ENCODE measurements at regions of chr17 and their contacts with region 1.

Region 1: GRCh38 chr17:73710095-73710592 is 65.9 kb upstream of the SDK2 start:
- DNase-seq: peak; percentile 65 to 89
- H3K4me3 ChIP-seq: no peak overlapping the region
- H3K27ac ChIP-seq: no peak overlapping the region
- H3K4me1 ChIP-seq: peaks cover 0 to 6% (median 0%) of the 10 kb centered on the region in 4 donors
- H3K27me3 ChIP-seq: peaks cover 0 to 67% (median 8%) of the 10 kb centered on the region in 3 donors
- CTCF ChIP-seq: peak in 5 of 7 experiments; percentile 63 to 80 (median 69)
- EP300 ChIP-seq: no peak
- POLR2A ChIP-seq: no peak

Region 2: DNA sequence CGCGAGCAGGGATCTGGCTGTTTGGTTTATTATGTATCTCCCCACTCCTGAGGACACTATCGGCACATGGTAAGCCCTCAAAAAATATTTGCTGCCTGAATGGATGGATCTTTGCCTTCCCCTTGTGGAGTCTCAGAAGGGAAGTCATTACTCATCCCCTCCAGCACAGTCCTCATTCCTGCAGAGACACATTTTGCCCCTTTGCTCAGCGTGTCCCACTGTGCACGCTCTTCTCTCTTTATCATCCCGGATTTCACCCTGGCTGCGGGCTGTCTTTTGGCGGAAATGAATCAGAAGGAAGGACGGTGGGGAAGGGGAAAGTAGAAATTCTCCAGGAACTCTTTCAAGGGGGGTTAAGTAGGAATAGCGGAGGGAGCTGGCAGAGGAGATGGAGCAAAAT is 273.2 kb before region 1 on chr17:
- intact Hi-C with region 1: loop called (anchors 5 kb)
- DNase-seq: no peak
- H3K4me3 ChIP-seq: no peak overlapping the region
- H3K27ac ChIP-seq: no peak overlapping the region
- H3K4me1 ChIP-seq: no peaks in the 10 kb centered on the region
- H3K27me3 ChIP-seq: peaks cover 0 to 8% (median 0%) of the 10 kb centered on the region in 3 donors
- CTCF ChIP-seq: no peak
- EP300 ChIP-seq: no peak
- POLR2A ChIP-seq: no peak

Region 3: GRCh38 chr17:73575470-73576221 is 134.5 kb before region 1 on chr17:
- intact Hi-C with region 1: loop called (anchors 10 kb)
- DNase-seq: no peak
- H3K4me3 ChIP-seq: no peak overlapping the region
- H3K27ac ChIP-seq: no peak overlapping the region
- H3K4me1 ChIP-seq: no peaks in the 10 kb centered on the region
- H3K27me3 ChIP-seq: peaks cover 0 to 33% (median 4%) of the 10 kb centered on the region in 3 donors
- CTCF ChIP-seq: no peak
- EP300 ChIP-seq: no peak
- POLR2A ChIP-seq: no peak

Region 4: GRCh38 chr17:73770115-73770848 is 60.1 kb after region 1 on chr17:
- intact Hi-C with region 1: no loop called
- DNase-seq: peak; percentile 81 to 95
- H3K4me3 ChIP-seq: no peak overlapping the region
- H3K27ac ChIP-seq: peak overlapping the region in 1 of 5 donors; percentile 38
- H3K4me1 ChIP-seq: peaks cover 0 to 16% (median 12%) of the 10 kb centered on the region in 4 donors
- H3K27me3 ChIP-seq: peaks cover 0 to under 1% (median 0%) of the 10 kb centered on the region in 3 donors
- CTCF ChIP-seq: no peak
- EP300 ChIP-seq: no peak
- POLR2A ChIP-seq: no peak

Measured in stomach (tissue), 19 donors.